ENCODE measurements at regions of chr9 and their contacts with region 1.

Region 1: DNA sequence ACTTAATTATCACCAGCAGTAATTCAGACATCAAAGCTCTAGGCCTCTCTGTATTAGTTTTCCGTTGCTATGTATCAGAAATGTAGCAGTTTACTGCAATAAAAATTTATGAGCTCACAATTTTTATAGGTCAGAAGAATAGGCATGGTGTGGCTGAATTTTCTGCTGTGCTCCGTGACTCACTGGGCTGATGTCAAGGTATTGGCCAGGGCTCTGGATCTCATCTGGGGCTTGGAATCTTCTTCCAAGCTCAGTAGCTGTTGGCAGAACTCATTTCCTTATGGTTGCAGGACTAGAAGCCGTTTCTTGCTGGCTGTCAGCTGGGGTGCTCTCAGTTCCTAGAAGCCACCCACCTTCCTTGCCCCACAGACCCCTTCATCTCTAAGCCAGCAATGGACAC is 66.3 kb downstream of the PSAT1 start:
- DNase-seq: peak; percentile 71
- H3K4me3 ChIP-seq: no peak overlapping the region
- H3K27ac ChIP-seq: peak overlapping the region in 3 of 4 donors; percentile 55 to 68 (median 67)
- H3K4me1 ChIP-seq: peaks cover 0 to 21% (median 16%) of the 10 kb centered on the region in 4 donors
- H3K27me3 ChIP-seq: no peaks in the 10 kb centered on the region
- CTCF ChIP-seq: no peak
- EP300 ChIP-seq: peak in 1 of 4 donors; percentile 14
- POLR2A ChIP-seq: no peak

Region 2: DNA sequence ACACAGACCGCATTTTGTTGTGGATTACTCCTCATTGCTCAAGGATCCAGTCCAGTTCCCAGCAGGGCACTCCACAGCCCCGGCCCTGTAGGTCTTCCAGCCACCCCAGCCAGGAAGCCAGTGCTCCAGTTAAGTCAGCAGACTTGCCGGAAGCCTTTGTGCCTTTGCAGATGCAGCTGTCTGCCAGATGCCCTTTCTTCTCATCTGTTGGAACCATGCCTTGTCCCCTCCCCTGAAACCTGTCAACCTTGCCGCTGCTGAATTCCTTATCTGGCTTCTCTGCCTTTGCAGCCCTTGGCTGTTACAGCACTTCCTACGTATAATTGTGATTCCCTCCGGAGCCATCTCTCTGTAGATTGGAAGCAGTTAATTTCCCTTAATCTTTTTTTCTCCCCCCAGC is 37.9 kb before region 1 on chr9:
- intact Hi-C with region 1: loop called (anchors 5 kb)
- DNase-seq: no peak
- H3K4me3 ChIP-seq: no peak overlapping the region
- H3K27ac ChIP-seq: peak overlapping the region in 1 of 4 donors; percentile 24
- H3K4me1 ChIP-seq: peaks cover 0 to 17% (median 13%) of the 10 kb centered on the region in 4 donors
- H3K27me3 ChIP-seq: no peaks in the 10 kb centered on the region
- CTCF ChIP-seq: no peak
- EP300 ChIP-seq: no peak
- POLR2A ChIP-seq: no peak

Region 3: DNA sequence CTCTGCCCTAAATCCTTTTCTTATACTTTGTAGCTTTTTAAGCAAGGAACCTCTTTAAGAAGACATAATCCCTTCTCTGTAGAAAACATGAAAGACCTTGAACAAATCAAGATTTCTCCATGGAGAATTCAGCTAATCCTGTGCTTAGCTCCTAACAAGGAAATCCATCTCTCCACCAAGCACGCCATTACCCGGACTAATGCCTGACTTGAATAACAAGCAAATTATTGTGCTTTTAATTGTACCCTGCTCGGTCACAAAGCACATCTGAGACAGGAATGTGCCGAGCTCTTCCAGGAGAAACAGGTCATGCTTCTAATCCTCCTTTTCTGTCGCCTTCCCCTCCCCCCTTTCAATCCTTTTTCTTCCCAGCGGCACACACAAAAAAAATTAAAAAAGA is 75.0 kb after region 1 on chr9:
- intact Hi-C with region 1: no loop called
- DNase-seq: no peak
- H3K4me3 ChIP-seq: no peak overlapping the region
- H3K27ac ChIP-seq: no peak overlapping the region
- H3K4me1 ChIP-seq: peaks cover 0 to 11% (median 5%) of the 10 kb centered on the region in 4 donors
- H3K27me3 ChIP-seq: no peaks in the 10 kb centered on the region
- CTCF ChIP-seq: no peak
- EP300 ChIP-seq: no peak
- POLR2A ChIP-seq: no peak